ENCODE measurements at regions of chr3 and their contacts with region 1.

Region 1: DNA sequence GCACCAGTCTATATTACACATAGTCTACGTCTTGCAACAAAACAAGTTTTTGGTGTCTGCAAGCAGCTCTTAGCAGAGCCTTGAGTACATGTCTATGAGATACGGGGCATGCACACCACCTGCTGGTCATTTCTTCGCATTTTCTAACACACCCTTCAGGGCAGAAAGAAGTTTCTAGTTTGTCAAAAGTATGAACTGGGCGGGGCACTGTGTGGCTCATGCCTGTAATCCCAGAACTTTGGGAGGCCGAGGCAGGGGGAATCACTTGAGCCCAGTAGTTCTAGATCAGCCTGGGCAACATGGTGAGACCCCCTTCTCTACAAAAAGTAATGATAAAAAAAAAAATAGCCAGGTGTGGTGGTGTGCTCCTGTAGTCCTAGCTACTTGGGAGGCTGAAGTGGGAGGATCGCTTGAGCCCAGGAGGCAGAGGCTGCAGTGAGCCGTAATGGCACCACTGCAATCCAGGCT is 64.2 kb upstream of the ARL8B start:
- DNase-seq: peak; percentile 73 to 93 (median 76)
- ATAC-seq: peak; percentile 96
- H3K4me3 ChIP-seq: no peak overlapping the region
- H3K27ac ChIP-seq: no peak overlapping the region
- H3K4me1 ChIP-seq: peaks cover 5 to 36% of the 10 kb centered on the region in 2 experiments; a peak in 4 of 5 replicates
- H3K27me3 ChIP-seq: no peaks in the 10 kb centered on the region
- CTCF ChIP-seq: peak; percentile 88 to 94 (median 91)
- EP300 ChIP-seq: peak; percentile 44; the same call in 1 of the 2 replicates
- POLR2A ChIP-seq: no peak
- RAD21 ChIP-seq: peak; percentile 99

Region 2: GRCh38 chr3:4656059-4656458 is 401.8 kb before region 1 on chr3:
- CTCF ChIA-PET with region 1: no interaction called
- POLR2A ChIA-PET with region 1: no interaction called
- in situ Hi-C with region 1: no loop called
- intact Hi-C with region 1: loop called (anchors 1 kb)
- DNase-seq: peak; percentile 64 to 82 (median 70)
- ATAC-seq: peak; percentile 99
- H3K4me3 ChIP-seq: no peak overlapping the region
- H3K27ac ChIP-seq: no peak overlapping the region
- H3K4me1 ChIP-seq: no peaks in the 10 kb centered on the region
- H3K27me3 ChIP-seq: no peaks in the 10 kb centered on the region
- CTCF ChIP-seq: peak; percentile 90 to 98 (median 96)
- EP300 ChIP-seq: no peak
- POLR2A ChIP-seq: no peak
- RAD21 ChIP-seq: peak; percentile 46 to 81

Region 3: DNA sequence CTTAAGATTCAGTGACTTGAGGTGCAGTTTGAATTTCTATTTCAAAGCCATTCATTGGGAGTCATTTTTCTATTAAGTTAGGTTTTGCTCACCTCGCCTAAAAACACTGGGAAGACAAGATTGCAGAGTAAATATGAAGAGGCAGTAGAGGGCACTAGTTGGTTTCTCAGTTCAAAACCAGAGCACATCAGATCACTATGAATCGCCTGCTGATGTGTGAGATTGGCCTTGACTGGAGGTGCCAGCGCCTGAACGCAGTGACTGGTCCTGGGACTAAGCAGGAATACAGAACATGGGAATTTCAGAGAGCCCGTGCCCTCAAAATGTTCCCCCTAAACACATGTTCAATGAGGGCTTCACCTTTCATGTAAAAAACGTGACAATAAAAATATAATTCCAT is 335.8 kb before region 1 on chr3:
- CTCF ChIA-PET with region 1: interaction called, 36 read pairs
- POLR2A ChIA-PET with region 1: interaction called, 6 read pairs
- in situ Hi-C with region 1: loop called (anchors 5 kb)
- intact Hi-C with region 1: loop called (anchors 1 kb)
- DNase-seq: peak; percentile 51 to 83 (median 66)
- ATAC-seq: peak; percentile 94
- H3K4me3 ChIP-seq: no peak overlapping the region
- H3K27ac ChIP-seq: no peak overlapping the region
- H3K4me1 ChIP-seq: peaks cover 0 to 20% of the 10 kb centered on the region in 2 experiments; a peak in 4 of 5 replicates
- H3K27me3 ChIP-seq: no peaks in the 10 kb centered on the region
- CTCF ChIP-seq: peak; percentile 76 to 84 (median 81)
- EP300 ChIP-seq: peak; percentile 55; the same call in 1 of the 2 replicates
- POLR2A ChIP-seq: no peak
- RAD21 ChIP-seq: peak; percentile 94 to 97

Region 4: GRCh38 chr3:4826237-4827100 is 231.4 kb before region 1 on chr3:
- CTCF ChIA-PET with region 1: no interaction called
- POLR2A ChIA-PET with region 1: interaction called, 3 read pairs
- in situ Hi-C with region 1: no loop called
- intact Hi-C with region 1: loop called (anchors 5 kb)
- DNase-seq: no peak
- ATAC-seq: no peak
- H3K4me3 ChIP-seq: no peak overlapping the region
- H3K27ac ChIP-seq: peak overlapping the region; percentile 16
- H3K4me1 ChIP-seq: peaks cover 45 to 89% of the 10 kb centered on the region in 2 experiments
- H3K27me3 ChIP-seq: no peaks in the 10 kb centered on the region
- CTCF ChIP-seq: no peak
- EP300 ChIP-seq: no peak
- POLR2A ChIP-seq: no peak; the same call in 1 of the 2 replicates
- RAD21 ChIP-seq: no peak

Region 5: DNA sequence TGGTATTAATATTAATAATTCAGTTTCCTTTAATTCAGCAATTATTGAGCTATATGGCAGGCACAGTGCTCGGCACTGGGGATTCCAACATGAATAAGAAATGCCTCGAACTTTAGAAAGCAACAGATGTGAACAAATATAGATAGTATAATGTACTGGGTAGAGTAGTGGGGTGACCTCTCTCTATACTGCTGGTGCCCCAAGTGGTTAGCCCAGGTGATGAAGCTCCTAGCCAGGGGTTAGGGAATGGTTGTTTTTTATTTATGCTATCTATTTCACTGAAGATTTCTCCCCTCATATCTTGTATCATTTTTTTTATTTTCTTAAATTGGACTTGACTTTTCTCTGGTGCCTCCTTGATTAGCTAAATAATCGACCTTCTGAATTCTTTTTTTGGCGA is 16.6 kb before region 1 on chr3:
- CTCF ChIA-PET with region 1: no interaction called
- POLR2A ChIA-PET with region 1: interaction called, 37 read pairs
- in situ Hi-C with region 1: no loop called
- intact Hi-C with region 1: no loop called
- DNase-seq: peak in 2 of 4 experiments; percentile 45 to 52
- ATAC-seq: peak; percentile 73
- H3K4me3 ChIP-seq: no peak overlapping the region
- H3K27ac ChIP-seq: no peak overlapping the region
- H3K4me1 ChIP-seq: peaks cover 8 to 37% of the 10 kb centered on the region in 2 experiments
- H3K27me3 ChIP-seq: no peaks in the 10 kb centered on the region
- CTCF ChIP-seq: peak; percentile 42 to 53 (median 52); a peak in 5 of 6 replicates
- EP300 ChIP-seq: no peak
- POLR2A ChIP-seq: no peak
- RAD21 ChIP-seq: peak; percentile 30 to 44

Measured in K562 (cell line).